ENCODE measurements at regions of chr4 and their contacts with region 1.

Region 1: GRCh38 chr4:56977321-56978012 is at the start of gene NOA1:
- DNase-seq: peak; percentile 97
- ATAC-seq: peak; percentile 83
- H3K4me3 Mint-ChIP-seq: peak within 1 kb of the TSS; percentile 99
- H3K27ac Mint-ChIP-seq: peak within 1 kb of the TSS; percentile 96
- H3K4me1 Mint-ChIP-seq: peaks cover 26% of the 10 kb centered on the region
- H3K27me3 Mint-ChIP-seq: no peaks in the 10 kb centered on the region; the same call in 1 of the 2 replicates
- CTCF ChIP-seq: no peak
- total RNA-seq, gene NOA1: 32.5 to 35.7 TPM (median 33.0 TPM) in 3 replicates

Region 2: DNA sequence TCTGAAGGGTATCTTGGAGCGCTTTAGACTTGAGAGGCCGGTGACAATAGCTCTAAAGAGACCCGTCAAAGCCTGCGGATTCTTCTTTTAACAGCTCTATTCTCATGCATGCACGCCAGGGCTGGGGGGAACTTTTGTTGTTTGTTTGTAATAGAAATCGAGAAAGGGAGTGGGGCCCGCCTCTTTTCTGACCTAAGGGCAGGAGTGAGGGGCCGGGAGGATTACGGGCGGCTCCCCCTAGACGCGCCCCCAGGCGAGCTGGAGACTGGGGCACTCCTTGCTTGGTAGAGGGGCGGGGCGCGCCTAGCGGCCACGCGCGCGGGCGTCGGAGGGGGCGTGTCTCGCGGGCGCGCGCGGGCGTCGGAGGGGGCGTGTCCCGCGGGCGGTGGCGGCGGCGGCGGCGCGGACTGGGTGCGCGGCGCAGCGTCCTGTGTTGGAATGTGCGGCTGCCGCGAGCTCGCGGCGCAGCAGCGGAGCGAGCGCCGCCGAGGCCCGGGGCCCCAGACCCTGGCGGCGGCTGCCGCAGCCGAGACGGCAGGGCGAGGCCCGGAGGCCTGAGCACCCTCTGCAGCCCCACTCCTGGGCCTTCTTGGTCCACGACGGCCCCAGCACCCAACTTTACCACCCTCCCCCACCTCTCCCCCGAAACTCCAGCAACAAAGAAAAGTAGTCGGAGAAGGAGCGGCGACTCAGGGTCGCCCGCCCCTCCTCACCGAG is 69.8 kb before region 1 on chr4 and contains the start of gene REST:
- CTCF ChIA-PET with region 1: interaction called, 8 read pairs
- POLR2A ChIA-PET with region 1: interaction called, 18 read pairs
- DNase-seq: peak; percentile 91
- ATAC-seq: peak; percentile 79
- H3K4me3 Mint-ChIP-seq: peak within 1 kb of the TSS; percentile 77
- H3K27ac Mint-ChIP-seq: peak within 1 kb of the TSS; percentile 93
- H3K4me1 Mint-ChIP-seq: peaks cover 56% of the 10 kb centered on the region
- H3K27me3 Mint-ChIP-seq: peaks cover 31% of the 10 kb centered on the region
- CTCF ChIP-seq: no peak
- total RNA-seq, gene REST: 73.9 to 76.4 TPM (median 75.1 TPM) in 3 replicates

Region 3: GRCh38 chr4:56959100-56959499 is 18.4 kb before region 1 on chr4:
- CTCF ChIA-PET with region 1: interaction called, 18 read pairs
- POLR2A ChIA-PET with region 1: no interaction called
- DNase-seq: no peak
- ATAC-seq: no peak
- H3K4me3 Mint-ChIP-seq: no peak overlapping the region
- H3K27ac Mint-ChIP-seq: no peak overlapping the region
- H3K4me1 Mint-ChIP-seq: no peaks in the 10 kb centered on the region
- H3K27me3 Mint-ChIP-seq: no peaks in the 10 kb centered on the region
- CTCF ChIP-seq: no peak

Region 4: DNA sequence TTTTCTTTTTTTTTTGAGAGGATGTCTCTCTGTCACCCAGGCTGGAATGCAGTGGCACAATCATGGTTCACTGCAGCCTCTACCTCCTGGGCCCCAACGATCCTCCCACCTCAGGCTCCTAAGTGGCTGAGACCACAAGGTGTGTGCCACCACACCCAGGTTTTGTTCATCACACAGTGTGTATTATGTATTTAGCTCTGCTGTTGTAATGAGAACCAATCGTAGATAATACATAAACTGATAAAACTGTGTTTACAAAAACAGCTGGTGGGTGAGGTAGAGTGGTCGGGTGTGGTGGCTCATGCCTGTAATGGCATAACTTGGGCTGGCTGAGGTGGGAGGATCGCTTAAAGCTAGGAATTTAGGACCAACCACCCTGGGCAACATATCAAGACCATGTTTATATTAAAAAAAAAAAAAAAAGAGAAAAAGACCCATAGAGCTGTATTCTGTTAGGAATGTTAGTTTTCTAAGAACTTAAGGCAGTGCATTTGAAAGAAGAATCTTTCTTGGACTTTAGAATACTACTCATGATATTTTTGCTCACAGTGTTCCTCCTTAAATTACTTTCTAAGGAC is 36.2 kb after region 1 on chr4:
- CTCF ChIA-PET with region 1: no interaction called
- POLR2A ChIA-PET with region 1: no interaction called
- DNase-seq: no peak
- ATAC-seq: no peak
- H3K4me3 Mint-ChIP-seq: no peak overlapping the region
- H3K27ac Mint-ChIP-seq: no peak overlapping the region
- H3K4me1 Mint-ChIP-seq: no peaks in the 10 kb centered on the region
- H3K27me3 Mint-ChIP-seq: no peaks in the 10 kb centered on the region
- CTCF ChIP-seq: no peak

Region 5: DNA sequence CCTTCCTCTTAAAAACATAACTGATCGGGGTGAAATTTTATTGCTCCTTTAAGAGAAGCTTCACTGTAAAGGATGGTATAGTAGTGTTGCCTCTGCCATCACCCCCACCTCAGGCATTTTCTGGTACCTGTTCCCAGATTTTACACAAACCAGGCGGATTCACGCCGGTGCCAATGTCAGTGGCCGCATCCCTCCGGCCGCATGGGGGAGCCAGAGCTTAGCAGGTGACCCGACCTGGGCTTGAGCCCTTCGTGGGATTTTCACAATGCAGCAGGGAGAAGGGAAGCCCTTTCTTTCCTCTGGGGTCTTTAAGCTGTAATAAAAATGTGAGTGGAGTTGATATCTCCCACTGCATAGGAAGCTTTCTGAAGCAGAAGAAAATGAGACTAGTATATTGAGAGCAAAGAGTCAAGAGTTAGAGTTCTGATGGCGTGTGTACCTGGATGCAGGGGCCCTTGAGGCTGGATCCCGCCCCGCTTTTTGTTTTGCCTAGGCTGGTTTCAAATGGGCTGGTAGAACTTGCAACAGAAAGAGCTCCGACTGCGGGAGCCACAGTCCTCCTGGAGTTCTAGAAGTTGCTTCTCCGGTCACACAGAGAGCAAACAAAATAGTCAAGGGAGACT is 60.6 kb after region 1 on chr4:
- CTCF ChIA-PET with region 1: interaction called, 10 read pairs
- POLR2A ChIA-PET with region 1: no interaction called
- DNase-seq: peak; percentile 85
- ATAC-seq: peak; percentile 92
- H3K4me3 Mint-ChIP-seq: peak overlapping the region; percentile 52
- H3K27ac Mint-ChIP-seq: no peak overlapping the region
- H3K4me1 Mint-ChIP-seq: peaks cover 13% of the 10 kb centered on the region
- H3K27me3 Mint-ChIP-seq: no peaks in the 10 kb centered on the region; the same call in 1 of the 2 replicates
- CTCF ChIP-seq: peak; percentile 70; the same call in 1 of the 2 replicates

Measured in WTC11 (cell line).